H1 (cell line): ENCODE measurements at regions of chr21 and their contacts with region 1.

Region 1: GRCh38 chr21:42593007-42593806 is 60.2 kb upstream of the PDE9A start:
- DNase-seq: peak; percentile 34 to 85
- H3K4me3 ChIP-seq: peak overlapping the region in 1 of 4 experiments; percentile 42; a peak in 1 of 8 replicates
- H3K27ac ChIP-seq: no peak overlapping the region
- H3K4me1 ChIP-seq: peaks cover 0 to 4% (median 2%) of the 10 kb centered on the region in 4 experiments; a peak in 5 of 7 replicates
- H3K27me3 ChIP-seq: no peaks in the 10 kb centered on the region; a peak in 1 of 7 replicates
- CTCF ChIP-seq: peak; percentile 61 to 92 (median 72)
- EP300 ChIP-seq: no peak
- POLR2A ChIP-seq: no peak
- RAD21 ChIP-seq: peak; percentile 90 to 93

Region 2: GRCh38 chr21:42581993-42582786 is 11.0 kb before region 1 on chr21:
- CTCF ChIA-PET with region 1: interaction called, 16 read pairs
- POLR2A ChIA-PET with region 1: interaction called, 3 read pairs
- DNase-seq: no peak
- H3K4me3 ChIP-seq: no peak overlapping the region
- H3K27ac ChIP-seq: no peak overlapping the region
- H3K4me1 ChIP-seq: no peaks in the 10 kb centered on the region; a peak in 1 of 7 replicates
- H3K27me3 ChIP-seq: no peaks in the 10 kb centered on the region
- CTCF ChIP-seq: no peak
- EP300 ChIP-seq: no peak
- POLR2A ChIP-seq: no peak
- RAD21 ChIP-seq: no peak

Region 3: GRCh38 chr21:42609811-42610210 is 16.6 kb after region 1 on chr21:
- CTCF ChIA-PET with region 1: interaction called, 17 read pairs
- POLR2A ChIA-PET with region 1: interaction called, 3 read pairs
- DNase-seq: no peak
- H3K4me3 ChIP-seq: no peak overlapping the region
- H3K27ac ChIP-seq: no peak overlapping the region
- H3K4me1 ChIP-seq: no peaks in the 10 kb centered on the region
- H3K27me3 ChIP-seq: peaks cover 0 to 2% (median under 1%) of the 10 kb centered on the region in 4 experiments; a peak in 2 of 7 replicates
- CTCF ChIP-seq: no peak
- EP300 ChIP-seq: no peak
- POLR2A ChIP-seq: no peak
- RAD21 ChIP-seq: no peak

Region 4: GRCh38 chr21:42652527-42653230 is 59.5 kb after region 1 on chr21:
- CTCF ChIA-PET with region 1: interaction called, 18 read pairs
- POLR2A ChIA-PET with region 1: no interaction called
- DNase-seq: peak in 1 of 2 experiments; percentile 75
- H3K4me3 ChIP-seq: peak overlapping the region; percentile 64 to 92 (median 76)
- H3K27ac ChIP-seq: 0 out of 2 replicates have a peak overlapping the region, but pooled peaks have one; percentile 31
- H3K4me1 ChIP-seq: peaks cover 13 to 41% (median 36%) of the 10 kb centered on the region in 4 experiments
- H3K27me3 ChIP-seq: no peaks in the 10 kb centered on the region; a peak in 2 of 7 replicates
- CTCF ChIP-seq: peak in 2 of 3 experiments; percentile 64 to 66; a peak in 3 of 4 replicates
- EP300 ChIP-seq: no peak
- POLR2A ChIP-seq: no peak
- RAD21 ChIP-seq: peak; percentile 42 to 62; a peak in 3 of 4 replicates

Region 5: GRCh38 chr21:42677339-42678321 is 84.4 kb after region 1 on chr21:
- CTCF ChIA-PET with region 1: interaction called, 13 read pairs
- POLR2A ChIA-PET with region 1: interaction called, 4 read pairs
- DNase-seq: no peak
- H3K4me3 ChIP-seq: no peak overlapping the region
- H3K27ac ChIP-seq: no peak overlapping the region
- H3K4me1 ChIP-seq: peaks cover 2 to 27% (median 14%) of the 10 kb centered on the region in 4 experiments; a peak in 6 of 7 replicates
- H3K27me3 ChIP-seq: no peaks in the 10 kb centered on the region
- CTCF ChIP-seq: peak in 1 of 3 experiments; percentile 2; a peak in 1 of 4 replicates
- EP300 ChIP-seq: no peak
- POLR2A ChIP-seq: no peak
- RAD21 ChIP-seq: no peak

Region 6: DNA sequence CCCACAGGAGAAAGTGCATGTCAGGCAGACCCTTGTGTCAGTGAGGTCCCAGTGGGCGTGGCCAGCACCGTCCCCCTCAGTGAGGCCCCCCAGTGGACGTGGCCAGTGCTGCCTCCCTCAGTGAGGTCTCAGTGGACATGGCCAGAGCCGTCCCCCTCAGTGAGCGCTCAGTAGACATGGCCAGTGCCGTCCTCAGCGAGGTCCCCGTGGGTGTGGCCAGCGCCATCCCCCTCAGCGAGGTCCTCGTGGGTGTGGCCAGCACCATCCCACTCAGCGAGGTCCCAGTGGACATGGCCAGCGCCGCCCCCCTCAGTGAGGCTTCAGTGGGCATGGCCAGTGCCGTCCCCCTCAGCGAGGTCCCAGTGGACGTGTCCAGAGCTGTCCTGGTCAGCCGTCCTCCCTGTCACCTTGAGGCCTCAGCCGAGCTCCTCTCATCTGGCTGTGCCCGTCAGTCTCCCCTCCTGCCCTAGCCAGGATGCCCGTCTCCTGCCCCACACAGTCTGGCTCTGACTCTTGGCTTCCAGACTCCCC is 95.7 kb after region 1 on chr21:
- CTCF ChIA-PET with region 1: interaction called, 10 read pairs
- POLR2A ChIA-PET with region 1: no interaction called
- DNase-seq: no peak
- H3K4me3 ChIP-seq: no peak overlapping the region
- H3K27ac ChIP-seq: no peak overlapping the region
- H3K4me1 ChIP-seq: peaks cover 0 to 2% (median 0%) of the 10 kb centered on the region in 4 experiments; a peak in 1 of 7 replicates
- H3K27me3 ChIP-seq: no peaks in the 10 kb centered on the region
- CTCF ChIP-seq: peak; percentile 37 to 67 (median 46)
- EP300 ChIP-seq: no peak
- POLR2A ChIP-seq: no peak
- RAD21 ChIP-seq: peak; percentile 6 to 47; a peak in 2 of 4 replicates

Region 7: DNA sequence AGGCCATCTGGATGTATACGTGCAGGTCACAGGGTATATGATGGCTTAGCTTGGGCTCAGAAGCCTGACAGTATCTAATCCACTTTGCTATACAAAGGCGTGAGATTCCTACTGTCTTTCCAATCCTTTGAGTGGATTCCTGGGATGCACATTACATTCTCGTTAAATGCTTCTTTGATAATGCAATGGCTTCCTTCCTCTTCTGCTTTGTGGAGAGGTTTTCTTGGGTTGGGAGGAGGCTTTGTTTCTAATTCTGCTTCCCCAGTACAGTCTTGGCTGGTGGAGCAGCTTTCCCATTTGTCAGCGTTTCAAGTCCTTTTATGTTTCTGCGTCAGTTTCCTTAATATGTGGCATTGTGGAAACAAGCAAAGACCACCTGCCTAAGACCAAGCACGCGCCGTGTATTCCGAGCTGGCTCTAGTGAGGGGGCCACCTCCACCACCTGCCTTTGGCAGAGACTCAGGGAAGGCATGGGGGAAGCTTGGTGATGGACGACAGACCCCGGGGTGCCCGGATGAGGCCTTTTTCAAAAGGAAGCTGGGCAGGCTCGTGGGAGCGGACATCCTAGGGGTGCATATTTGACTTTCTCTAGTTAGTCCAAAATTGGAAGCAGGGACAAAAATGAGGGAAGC is 213.4 kb after region 1 on chr21:
- CTCF ChIA-PET with region 1: interaction called, 11 read pairs
- POLR2A ChIA-PET with region 1: no interaction called
- DNase-seq: peak in 1 of 2 experiments; percentile 51
- H3K4me3 ChIP-seq: no peak overlapping the region
- H3K27ac ChIP-seq: no peak overlapping the region
- H3K4me1 ChIP-seq: peaks cover 0 to 14% (median 4%) of the 10 kb centered on the region in 4 experiments; a peak in 5 of 7 replicates
- H3K27me3 ChIP-seq: no peaks in the 10 kb centered on the region
- CTCF ChIP-seq: no peak
- EP300 ChIP-seq: no peak
- POLR2A ChIP-seq: no peak
- RAD21 ChIP-seq: no peak